Ascending aorta (tissue), 2 donors: ENCODE measurements at regions of chr1 and their contacts with region 1.

Region 1: DNA sequence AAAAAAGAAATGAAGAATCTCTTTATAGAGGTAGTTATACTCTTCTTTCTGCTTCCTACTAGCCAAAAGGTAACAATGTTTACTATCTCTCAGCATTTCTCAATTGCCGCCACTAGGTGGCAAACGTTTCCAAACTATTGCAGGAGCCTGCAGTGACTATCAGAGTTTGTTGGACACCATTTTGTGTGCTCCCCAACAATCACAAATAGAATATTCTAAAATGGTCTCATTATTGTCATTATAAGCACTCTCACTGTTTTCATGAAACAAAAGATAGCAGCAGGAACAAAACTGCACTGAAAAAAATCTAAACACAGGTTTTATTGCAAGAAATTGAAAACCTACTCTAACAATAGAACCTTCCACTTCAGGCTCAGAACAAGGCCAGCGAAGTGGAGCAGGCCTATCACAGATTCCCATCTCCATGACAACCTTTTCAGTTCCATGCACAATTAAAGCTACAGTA is 83.9 kb upstream of the PLPPR4 start:
- DNase-seq: peak in 1 of 2 donors; percentile 80
- H3K4me3 ChIP-seq: no peak overlapping the region
- H3K27ac ChIP-seq: no peak overlapping the region
- H3K4me1 ChIP-seq: no peaks in the 10 kb centered on the region
- H3K27me3 ChIP-seq: no peaks in the 10 kb centered on the region
- CTCF ChIP-seq: peak; percentile 42 to 66 (median 61)

Region 2: DNA sequence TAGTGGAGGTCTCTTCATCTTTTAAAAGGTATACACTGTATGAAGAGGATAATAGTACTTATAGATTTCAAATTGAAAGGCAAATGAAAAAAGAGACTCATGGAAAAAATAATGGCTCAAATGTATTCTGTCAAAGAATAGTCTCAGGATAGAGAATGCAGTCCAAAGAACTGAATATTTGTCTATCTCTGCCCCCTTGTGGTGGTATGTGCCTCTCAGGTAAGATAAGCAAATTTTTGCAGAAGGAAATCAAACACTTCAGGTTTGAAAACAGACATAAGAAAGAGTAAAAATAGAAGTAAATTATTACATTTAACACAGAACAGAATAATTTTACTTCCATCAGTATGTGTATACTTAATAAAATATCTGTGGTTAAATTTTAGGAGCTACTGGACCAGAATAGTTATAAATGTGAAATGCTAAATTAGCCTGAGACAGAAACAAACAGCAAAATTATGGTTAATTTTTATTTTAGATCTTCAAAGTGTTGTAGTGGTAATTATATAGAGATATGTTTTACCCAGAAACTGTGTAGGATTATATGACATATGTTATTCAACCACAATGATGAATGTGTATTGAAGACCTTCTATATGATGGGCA is 301.1 kb after region 1 on chr1:
- intact Hi-C with region 1: loop called (anchors 2 kb)
- DNase-seq: no peak
- H3K4me3 ChIP-seq: no peak overlapping the region
- H3K27ac ChIP-seq: no peak overlapping the region
- H3K4me1 ChIP-seq: no peaks in the 10 kb centered on the region
- H3K27me3 ChIP-seq: no peaks in the 10 kb centered on the region
- CTCF ChIP-seq: peak; percentile 27 to 58 (median 28)

Region 3: DNA sequence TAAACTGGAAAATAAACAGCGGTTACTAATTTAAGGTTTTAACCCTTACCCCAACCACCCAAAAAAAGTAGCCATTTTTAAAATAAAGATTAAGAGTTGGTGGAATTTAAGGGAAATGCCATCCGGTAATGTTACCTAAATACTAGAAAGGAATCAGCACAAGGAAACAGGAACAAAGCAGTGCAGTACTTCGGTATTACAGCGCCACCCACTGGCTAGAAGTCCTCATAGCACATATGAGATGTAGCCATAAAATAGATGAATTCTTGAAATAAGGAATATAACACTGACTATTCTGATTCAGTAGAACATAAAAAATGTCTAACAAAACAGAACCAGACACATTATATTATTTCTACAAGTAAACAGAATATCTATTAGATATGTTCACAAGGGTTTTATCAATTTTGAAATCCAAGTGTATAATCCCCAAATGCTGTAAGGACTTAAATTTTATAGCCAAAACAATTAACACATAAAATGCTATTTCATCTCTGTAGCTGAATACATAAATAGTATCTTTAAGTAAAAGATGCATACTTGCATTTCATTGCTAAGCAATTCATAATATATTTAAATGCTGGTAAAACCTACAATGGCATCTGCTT is 527.3 kb after region 1 on chr1:
- intact Hi-C with region 1: loop called (anchors 5 kb)
- DNase-seq: peak in 1 of 2 donors; percentile 82
- H3K4me3 ChIP-seq: no peak overlapping the region
- H3K27ac ChIP-seq: no peak overlapping the region
- H3K4me1 ChIP-seq: no peaks in the 10 kb centered on the region
- H3K27me3 ChIP-seq: no peaks in the 10 kb centered on the region
- CTCF ChIP-seq: peak; percentile 48 to 65 (median 56)